WTC11 (cell line): ENCODE measurements at regions of chr4 and their contacts with region 1.

Region 1: GRCh38 chr4:185395956-185396723 is 416 bp upstream of the LRP2BP start:
- DNase-seq: peak; percentile 93
- ATAC-seq: peak; percentile 85
- H3K4me3 Mint-ChIP-seq: peak overlapping the region; percentile 78
- H3K27ac Mint-ChIP-seq: peak overlapping the region; percentile 93; the same call in 1 of the 2 replicates
- H3K4me1 Mint-ChIP-seq: peaks cover 22% of the 10 kb centered on the region
- H3K27me3 Mint-ChIP-seq: no peaks in the 10 kb centered on the region
- CTCF ChIP-seq: no peak

Region 2: DNA sequence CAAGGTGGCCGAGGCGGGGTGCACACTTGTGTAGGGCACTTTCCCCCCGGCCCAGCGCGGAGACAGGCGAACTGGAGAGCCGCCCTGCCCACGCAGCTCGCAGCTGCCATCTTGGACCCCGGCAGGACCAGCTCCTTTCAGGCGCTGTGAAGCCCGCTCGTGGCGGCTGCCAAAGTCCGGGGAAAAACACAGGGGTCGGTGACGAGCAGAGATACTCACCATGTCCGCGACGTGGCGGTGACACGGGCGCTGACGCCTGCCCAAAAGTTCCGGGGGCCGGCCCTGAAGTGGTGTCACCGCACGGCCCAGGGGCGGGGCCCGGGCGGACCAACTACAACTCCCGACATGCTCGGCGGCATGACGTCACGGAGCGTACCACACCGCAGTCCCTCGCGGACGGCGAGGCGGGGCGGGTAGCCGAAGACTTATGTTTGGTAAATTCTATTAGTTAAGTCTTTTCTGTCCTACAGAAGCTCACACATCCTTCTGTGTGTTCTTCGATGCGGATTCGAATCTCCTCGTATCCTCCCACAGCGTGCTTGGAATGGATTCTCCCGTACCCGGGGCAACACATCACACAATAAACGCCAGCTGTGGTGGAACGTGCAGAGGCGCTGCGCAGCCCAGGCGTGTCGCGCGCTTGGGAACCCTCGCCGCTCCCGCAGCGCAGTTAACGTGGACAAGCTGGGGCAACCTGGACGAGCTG is 29.7 kb after region 1 on chr4 and contains the start of gene UFSP2:
- CTCF ChIA-PET with region 1: interaction called, 11 read pairs
- POLR2A ChIA-PET with region 1: interaction called, 3 read pairs
- DNase-seq: peak; percentile 81
- ATAC-seq: peak; percentile 90
- H3K4me3 Mint-ChIP-seq: peak within 1 kb of the TSS; percentile 90
- H3K27ac Mint-ChIP-seq: peak within 1 kb of the TSS; percentile 99
- H3K4me1 Mint-ChIP-seq: peaks cover 10% of the 10 kb centered on the region
- H3K27me3 Mint-ChIP-seq: no peaks in the 10 kb centered on the region
- CTCF ChIP-seq: no peak
- total RNA-seq, gene UFSP2: 29.6 to 33.0 TPM (median 30.8 TPM) in 3 replicates